ENCODE measurements at regions of chr4 and their contacts with region 1.

Region 1: DNA sequence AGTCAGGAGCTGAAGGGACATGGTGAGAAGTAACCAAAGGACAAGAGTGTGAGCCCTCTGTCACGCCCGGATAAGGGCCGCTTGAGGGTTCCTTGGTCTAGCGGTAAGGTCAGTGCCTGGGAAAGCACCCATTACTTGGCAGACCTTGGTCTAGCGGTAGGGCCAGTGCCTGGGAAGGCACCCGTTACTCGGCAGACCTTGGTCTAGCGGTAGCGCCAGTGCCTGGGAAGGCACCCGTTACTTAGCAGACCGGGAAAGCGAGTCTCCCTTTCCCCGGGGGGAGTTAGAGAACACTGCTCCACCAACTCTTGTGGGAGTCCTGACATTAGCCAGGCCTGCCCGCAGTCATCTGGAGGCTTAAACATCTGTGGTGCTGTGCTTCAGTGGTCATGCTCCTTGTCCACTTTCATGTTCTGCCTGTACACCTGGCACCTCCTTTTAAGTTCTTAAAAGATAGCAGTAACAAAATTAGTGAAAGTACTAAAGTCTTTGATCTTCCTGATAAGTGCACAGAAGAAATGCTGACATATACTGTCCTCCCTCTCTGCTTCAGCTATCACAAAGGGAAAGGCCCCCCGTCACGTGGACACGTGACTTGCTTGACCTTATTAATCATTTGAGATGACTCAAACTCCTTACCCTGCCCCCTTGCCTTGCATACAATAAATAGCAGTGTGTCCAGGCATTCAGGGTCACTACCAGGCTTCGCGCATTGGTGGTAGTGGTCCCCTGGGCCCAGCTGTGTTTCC is 9.3 kb upstream of the SEC24B start:
- DNase-seq: no peak
- ATAC-seq: no peak

Region 2: GRCh38 chr4:109497511-109497910 is 73.2 kb after region 1 on chr4:
- intact Hi-C with region 1: loop called in 1 of 2 experiments (anchors 10 kb)
- DNase-seq: no peak
- ATAC-seq: no peak

Region 3: GRCh38 chr4:109559983-109560686 is 135.9 kb after region 1 on chr4 and contains the start of gene MCUB:
- intact Hi-C with region 1: loop called in 1 of 2 experiments (anchors 10 kb)
- DNase-seq: peak; percentile 85 to 91
- ATAC-seq: peak; percentile 99
- total RNA-seq, gene MCUB: 4.7 to 5.4 TPM

Region 4: DNA sequence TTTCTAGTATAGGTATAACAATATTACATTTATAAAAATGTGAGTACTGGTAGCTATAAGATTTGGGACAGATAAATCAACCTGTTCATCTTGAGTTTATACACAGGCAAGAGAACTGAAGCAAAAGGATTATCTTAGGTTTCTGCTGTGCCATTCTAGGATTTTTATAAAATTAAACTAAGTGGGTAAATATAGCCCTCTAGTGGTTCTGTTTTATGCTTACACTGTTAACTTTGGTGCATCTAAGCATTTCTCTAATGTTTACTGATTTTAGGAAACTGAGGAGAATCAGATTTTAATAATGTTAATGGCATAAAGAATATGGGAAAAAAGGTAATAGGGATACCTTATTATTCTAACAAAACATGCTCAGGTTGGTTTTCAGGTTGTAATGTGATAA is 402.5 kb after region 1 on chr4:
- intact Hi-C with region 1: loop called in 1 of 2 experiments (anchors 5 kb)
- DNase-seq: no peak
- ATAC-seq: peak; percentile 61

Region 5: DNA sequence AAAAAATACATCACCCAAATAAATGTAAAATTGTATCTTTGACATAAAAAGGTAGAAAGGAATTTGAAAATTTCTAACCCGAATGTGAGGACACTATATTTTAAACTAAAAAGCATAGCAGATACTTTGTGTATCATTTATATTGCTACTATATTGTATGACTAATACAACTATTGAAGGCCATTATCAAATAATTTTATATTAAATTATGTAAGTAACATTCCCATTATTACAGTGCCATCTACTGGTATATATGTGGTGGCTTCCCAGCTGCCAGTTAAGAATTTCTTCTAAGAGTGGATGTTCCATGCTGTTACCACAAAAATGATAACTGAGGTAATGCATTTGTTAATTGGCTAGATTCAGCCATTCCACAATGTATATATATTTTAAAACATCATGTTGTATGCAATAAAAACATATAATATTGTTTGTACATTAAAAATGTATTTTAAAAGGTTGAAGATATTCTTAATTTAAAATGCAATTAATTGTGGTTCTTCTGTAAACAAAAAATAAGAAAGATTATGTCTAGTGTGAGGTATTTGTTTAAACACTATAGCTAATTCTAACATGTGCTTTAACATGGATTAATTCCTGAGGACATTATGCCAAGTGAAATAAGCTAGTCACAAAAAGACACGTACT is 553.7 kb after region 1 on chr4:
- intact Hi-C with region 1: loop called in 1 of 2 experiments (anchors 10 kb)
- DNase-seq: no peak
- ATAC-seq: no peak

Measured in left colon (tissue), 2 donors.